ENCODE measurements at regions of chr4 and their contacts with region 1.

Region 1: DNA sequence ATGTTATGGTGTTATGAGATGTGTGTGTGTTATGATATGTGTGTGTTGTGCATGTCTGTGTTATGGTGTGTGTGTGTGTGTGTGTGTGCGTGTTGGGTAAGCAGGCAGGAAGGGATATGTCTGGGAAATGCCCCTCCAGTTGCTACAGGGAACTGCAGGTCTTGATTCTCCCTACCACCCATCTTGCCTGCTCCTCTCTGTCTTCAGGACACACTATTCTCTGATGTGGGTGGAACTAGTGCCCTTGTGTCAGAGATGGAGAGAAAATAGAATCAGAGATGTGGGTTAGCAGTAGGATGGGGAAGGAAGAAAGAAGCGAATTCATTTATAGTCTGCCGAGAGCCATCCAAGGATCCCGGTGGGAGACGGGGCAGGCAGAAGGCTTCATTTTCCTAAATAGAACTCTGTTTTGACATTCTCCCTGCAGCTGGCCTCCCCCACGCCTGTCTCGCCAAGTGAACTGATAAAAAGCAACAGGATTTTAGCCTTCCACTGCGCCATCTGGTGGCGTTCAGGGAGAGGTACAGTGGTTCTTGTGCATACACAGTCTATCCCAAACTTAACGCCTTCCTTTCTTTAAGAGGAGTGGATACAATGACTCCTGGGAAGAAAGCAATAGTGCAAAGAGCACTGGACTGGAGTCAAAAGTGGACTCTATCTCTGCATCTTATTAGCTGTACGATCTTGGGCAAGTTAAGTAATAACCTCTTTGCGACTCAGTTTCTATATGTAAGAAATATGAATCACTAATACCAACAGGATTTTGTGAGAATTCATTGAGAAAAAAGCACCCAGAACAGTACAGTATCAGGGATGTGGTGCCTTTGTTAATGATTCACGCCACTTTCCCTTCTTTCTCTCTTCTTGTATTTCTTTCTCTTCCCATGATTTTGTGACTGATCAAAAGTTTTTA is 14.1 kb upstream of the MGST2 start:
- DNase-seq: peak; percentile 79
- H3K4me3 Mint-ChIP-seq: no peak overlapping the region
- H3K27ac Mint-ChIP-seq: peak overlapping the region; percentile 4
- H3K4me1 Mint-ChIP-seq: peaks cover 6% of the 10 kb centered on the region
- H3K27me3 Mint-ChIP-seq: peaks cover 10% of the 10 kb centered on the region

Region 2: DNA sequence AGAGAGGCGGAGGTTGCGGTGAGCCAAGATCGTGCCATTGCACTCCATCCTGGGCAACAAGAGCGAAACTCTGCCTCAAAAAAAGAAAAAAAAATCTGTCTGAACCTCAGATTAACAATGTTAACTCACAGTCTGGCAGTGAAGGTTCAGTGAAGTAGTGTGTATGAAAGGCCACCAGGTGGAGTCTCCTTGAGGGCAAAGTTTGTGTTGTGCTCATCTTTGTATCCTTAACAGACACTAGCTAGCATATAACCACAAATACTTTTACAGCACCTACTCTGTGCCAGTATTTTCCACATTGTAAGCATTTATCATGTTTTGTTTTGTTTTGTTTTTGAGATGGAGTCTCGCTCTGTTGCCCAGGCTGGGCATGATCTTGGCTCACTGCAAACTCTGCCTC is 31.9 kb before region 1 on chr4:
- CTCF ChIA-PET with region 1: interaction called, 31 read pairs
- DNase-seq: peak; percentile 27
- H3K4me3 Mint-ChIP-seq: no peak overlapping the region
- H3K27ac Mint-ChIP-seq: no peak overlapping the region
- H3K4me1 Mint-ChIP-seq: no peaks in the 10 kb centered on the region
- H3K27me3 Mint-ChIP-seq: peaks cover 13% of the 10 kb centered on the region

Region 3: GRCh38 chr4:139815778-139816601 is 164.5 kb after region 1 on chr4:
- CTCF ChIA-PET with region 1: no interaction called
- DNase-seq: no peak
- H3K4me3 Mint-ChIP-seq: no peak overlapping the region
- H3K27ac Mint-ChIP-seq: no peak overlapping the region
- H3K4me1 Mint-ChIP-seq: no peaks in the 10 kb centered on the region
- H3K27me3 Mint-ChIP-seq: peaks cover 11% of the 10 kb centered on the region

Region 4: DNA sequence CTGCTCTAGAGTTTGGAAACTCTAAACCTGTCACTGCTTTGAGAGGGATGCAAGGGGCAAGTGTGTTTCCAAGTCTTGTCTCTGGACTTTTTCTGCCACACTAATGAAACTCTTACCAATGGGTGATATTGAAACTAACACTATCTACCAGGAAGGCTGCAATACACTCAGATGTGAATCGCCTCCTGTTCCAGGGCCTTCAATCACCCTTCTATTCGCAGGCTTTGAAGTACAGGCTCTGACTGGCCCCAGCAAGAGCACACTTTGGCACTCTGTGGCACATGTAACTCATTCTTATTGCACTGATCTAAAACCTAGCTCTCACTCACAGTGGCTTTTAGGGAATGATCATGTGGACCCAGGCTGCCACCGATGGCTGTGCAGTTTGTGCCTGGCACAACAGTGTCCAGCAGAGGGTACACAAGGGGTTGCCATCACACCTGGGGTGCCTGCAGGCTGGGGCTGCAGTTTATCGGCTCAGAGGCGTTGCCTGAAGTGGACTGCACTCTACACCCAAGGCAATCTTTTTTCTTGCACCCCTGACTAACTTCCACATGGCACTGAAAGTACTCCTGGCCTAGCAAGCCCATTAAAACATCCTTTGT is 224.9 kb after region 1 on chr4:
- CTCF ChIA-PET with region 1: no interaction called
- DNase-seq: no peak
- H3K4me3 Mint-ChIP-seq: no peak overlapping the region
- H3K27ac Mint-ChIP-seq: no peak overlapping the region
- H3K4me1 Mint-ChIP-seq: peaks cover 4% of the 10 kb centered on the region
- H3K27me3 Mint-ChIP-seq: no peaks in the 10 kb centered on the region